Activated T-helper 2 cell treated with anti-CD3 and anti-CD28 coated beads, Interferon-gamma antibody, Interleukin-2, Interleukin-4, amounts not matched to agents 10 μg/mL and 5 μg/mL and 100 μg/mL, durations not matched to agents 14 hours and 24 hours and 36 hours (primary cell): ENCODE measurements at regions of chr1 and their contacts with region 1.

Region 1: GRCh38 chr1:169106095-169106920 is at the start of gene ATP1B1:
- DNase-seq: peak; percentile 79
- H3K4me3 Mint-ChIP-seq: peak within 1 kb of the TSS; percentile 88
- H3K27ac Mint-ChIP-seq: peak within 1 kb of the TSS; percentile 78
- H3K4me1 Mint-ChIP-seq: peaks cover 42% of the 10 kb centered on the region
- H3K27me3 Mint-ChIP-seq: peaks cover 9% of the 10 kb centered on the region
- total RNA-seq, gene ATP1B1: 12.6 and 13.5 TPM in 2 replicates

Region 2: DNA sequence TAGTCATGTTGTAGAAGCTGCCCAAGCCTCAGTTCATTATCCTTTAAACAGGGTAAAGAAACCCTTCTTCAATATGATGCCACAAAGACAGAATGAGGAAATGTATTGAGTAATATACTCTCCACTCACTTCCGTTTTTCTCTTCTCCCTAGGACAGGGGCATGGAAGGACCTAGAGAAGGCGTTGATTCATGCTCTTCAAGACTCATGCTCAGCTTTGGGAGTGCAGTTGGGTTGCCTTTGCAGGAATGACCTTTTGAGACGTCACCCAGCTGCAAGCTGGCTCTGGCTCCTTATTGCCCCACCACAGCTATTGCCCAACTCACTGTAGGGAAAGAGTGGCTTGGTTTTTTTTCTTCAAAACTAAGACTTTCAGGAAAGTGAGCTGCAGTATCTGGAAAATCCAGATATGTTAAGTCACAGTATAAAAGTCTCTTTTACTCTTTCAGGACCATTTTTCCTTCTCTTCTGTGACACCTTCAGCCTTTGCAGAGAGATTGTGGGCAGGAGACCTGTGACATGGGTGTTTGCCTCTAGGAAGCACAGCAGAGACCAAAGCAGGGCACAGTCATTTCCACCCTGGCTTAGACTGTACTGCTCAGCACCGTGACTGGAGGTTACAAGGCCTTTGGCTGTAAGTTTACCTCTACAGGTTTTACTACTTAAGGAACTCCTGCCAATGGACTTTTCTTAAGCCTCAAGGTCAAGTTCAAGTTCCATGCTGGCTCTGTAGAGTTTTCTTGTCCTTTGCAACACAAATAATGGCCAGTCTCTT is 602.1 kb before region 1 on chr1:
- intact Hi-C with region 1: no loop called
- DNase-seq: no peak
- H3K4me3 Mint-ChIP-seq: no peak overlapping the region
- H3K27ac Mint-ChIP-seq: no peak overlapping the region
- H3K4me1 Mint-ChIP-seq: peaks cover 71% of the 10 kb centered on the region
- H3K27me3 Mint-ChIP-seq: no peaks in the 10 kb centered on the region

Region 3: GRCh38 chr1:168603501-168604110 is 502.7 kb before region 1 on chr1:
- intact Hi-C with region 1: loop called (anchors 10 kb)
- DNase-seq: peak; percentile 51
- H3K4me3 Mint-ChIP-seq: no peak overlapping the region
- H3K27ac Mint-ChIP-seq: no peak overlapping the region
- H3K4me1 Mint-ChIP-seq: peaks cover 5% of the 10 kb centered on the region
- H3K27me3 Mint-ChIP-seq: peaks cover 11% of the 10 kb centered on the region

Region 4: DNA sequence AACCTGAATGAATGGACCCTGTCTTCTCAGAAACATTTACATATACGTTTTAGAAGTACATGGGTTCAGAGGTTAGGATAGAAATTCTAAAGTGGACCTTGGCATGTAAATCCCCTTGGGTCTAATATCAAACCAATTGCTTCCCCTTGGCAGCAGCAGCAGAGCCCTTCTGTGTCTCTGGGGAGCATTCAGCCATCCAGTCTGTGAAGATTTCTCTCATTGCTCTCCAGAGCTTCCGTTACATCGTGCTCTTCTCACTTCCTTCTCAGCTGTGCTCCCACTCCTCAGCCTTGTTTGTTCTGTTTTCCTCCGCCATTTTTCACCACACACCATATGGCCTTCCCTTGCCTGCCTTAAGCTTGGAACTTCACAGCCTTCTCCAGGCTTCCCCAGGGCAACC is 61.3 kb before region 1 on chr1:
- intact Hi-C with region 1: loop called (anchors 5 kb)
- DNase-seq: no peak
- H3K4me3 Mint-ChIP-seq: peak overlapping the region; percentile 5
- H3K27ac Mint-ChIP-seq: peak overlapping the region; percentile 58
- H3K4me1 Mint-ChIP-seq: peaks cover 69% of the 10 kb centered on the region
- H3K27me3 Mint-ChIP-seq: no peaks in the 10 kb centered on the region

Region 5: GRCh38 chr1:169119405-169119804 is 13.1 kb after region 1 on chr1:
- intact Hi-C with region 1: no loop called
- DNase-seq: no peak
- H3K4me3 Mint-ChIP-seq: no peak overlapping the region
- H3K27ac Mint-ChIP-seq: no peak overlapping the region
- H3K4me1 Mint-ChIP-seq: peaks cover 13% of the 10 kb centered on the region
- H3K27me3 Mint-ChIP-seq: no peaks in the 10 kb centered on the region

Region 6: DNA sequence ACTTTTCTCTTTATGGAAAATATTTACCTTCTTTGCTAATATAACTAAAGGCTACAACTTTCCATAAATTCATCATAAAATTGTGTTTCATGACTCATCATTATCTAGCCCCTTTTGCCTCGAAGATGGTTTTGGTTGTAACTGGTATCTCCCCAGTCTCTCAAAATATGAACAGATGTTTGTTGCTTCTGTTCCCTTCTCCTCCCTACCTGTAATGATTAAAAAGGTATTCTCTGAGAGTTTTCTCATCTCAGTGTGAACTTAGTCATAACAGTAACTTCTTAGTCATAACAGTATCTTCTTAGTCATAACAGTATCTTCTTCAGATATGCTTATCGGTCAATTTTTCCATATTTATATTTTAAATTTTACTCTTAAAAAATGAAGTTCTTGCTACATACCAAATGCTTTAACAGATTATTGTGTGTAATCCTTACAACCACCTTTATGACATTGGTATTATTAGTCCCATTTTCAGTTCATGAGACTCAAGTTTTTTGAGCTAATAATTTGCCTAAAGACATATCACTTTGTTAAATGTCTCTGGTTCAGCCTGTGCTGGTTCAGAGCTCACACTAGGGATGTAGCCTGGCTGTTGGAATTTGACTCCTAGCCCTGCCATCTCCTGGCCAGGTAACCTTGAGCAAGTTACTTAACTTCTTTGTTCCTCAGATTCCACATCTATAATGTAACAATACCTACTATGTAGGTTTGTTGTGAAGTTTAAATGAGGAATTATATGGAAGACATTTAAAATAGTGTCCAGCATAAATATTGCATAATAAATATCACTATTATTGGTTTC is 32.8 kb after region 1 on chr1:
- intact Hi-C with region 1: loop called (anchors 1 kb)
- DNase-seq: no peak
- H3K4me3 Mint-ChIP-seq: no peak overlapping the region
- H3K27ac Mint-ChIP-seq: peak overlapping the region; percentile 56
- H3K4me1 Mint-ChIP-seq: peaks cover 12% of the 10 kb centered on the region
- H3K27me3 Mint-ChIP-seq: no peaks in the 10 kb centered on the region